PC-9 (cell line): ENCODE measurements at regions of chr4 and their contacts with region 1.

Region 1: GRCh38 chr4:11428899-11429698 is 405 bp upstream of the HS3ST1 start:
- DNase-seq: peak; percentile 87 to 95
- H3K4me3 ChIP-seq: peak overlapping the region; percentile 89
- H3K27ac ChIP-seq: peak overlapping the region; percentile 90
- H3K4me1 ChIP-seq: peaks cover 27% of the 10 kb centered on the region
- H3K27me3 ChIP-seq: no peaks in the 10 kb centered on the region
- CTCF ChIP-seq: peak; percentile 56

Region 2: DNA sequence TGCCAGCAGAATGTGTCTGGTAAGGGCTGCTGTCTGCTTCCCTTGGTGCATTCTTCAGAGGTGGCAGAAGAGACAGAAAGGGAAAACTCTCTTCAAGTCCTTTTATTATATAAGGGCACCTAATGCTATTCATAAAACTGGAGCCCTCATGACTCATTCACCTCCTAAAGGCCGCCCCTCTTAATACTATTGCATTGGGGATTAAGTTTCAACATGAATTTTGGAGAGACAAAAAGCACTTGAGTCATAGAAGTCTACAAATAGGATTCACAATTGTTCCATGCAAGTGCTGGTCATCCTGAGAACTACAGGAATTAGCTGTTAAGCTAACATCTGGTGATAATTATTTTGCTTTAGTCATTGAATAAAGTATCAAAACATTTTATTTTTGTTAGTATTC is 349.9 kb before region 1 on chr4:
- CTCF ChIA-PET with region 1: no interaction called
- POLR2A ChIA-PET with region 1: no interaction called
- intact Hi-C with region 1: no loop called
- DNase-seq: no peak
- H3K4me3 ChIP-seq: no peak overlapping the region
- H3K27ac ChIP-seq: no peak overlapping the region
- H3K4me1 ChIP-seq: no peaks in the 10 kb centered on the region
- H3K27me3 ChIP-seq: no peaks in the 10 kb centered on the region
- CTCF ChIP-seq: no peak

Region 3: GRCh38 chr4:11469650-11470437 is 40.7 kb after region 1 on chr4:
- CTCF ChIA-PET with region 1: no interaction called
- POLR2A ChIA-PET with region 1: no interaction called
- intact Hi-C with region 1: loop called (anchors 5 kb)
- DNase-seq: no peak
- H3K4me3 ChIP-seq: no peak overlapping the region
- H3K27ac ChIP-seq: no peak overlapping the region
- H3K4me1 ChIP-seq: no peaks in the 10 kb centered on the region
- H3K27me3 ChIP-seq: no peaks in the 10 kb centered on the region
- CTCF ChIP-seq: no peak

Region 4: DNA sequence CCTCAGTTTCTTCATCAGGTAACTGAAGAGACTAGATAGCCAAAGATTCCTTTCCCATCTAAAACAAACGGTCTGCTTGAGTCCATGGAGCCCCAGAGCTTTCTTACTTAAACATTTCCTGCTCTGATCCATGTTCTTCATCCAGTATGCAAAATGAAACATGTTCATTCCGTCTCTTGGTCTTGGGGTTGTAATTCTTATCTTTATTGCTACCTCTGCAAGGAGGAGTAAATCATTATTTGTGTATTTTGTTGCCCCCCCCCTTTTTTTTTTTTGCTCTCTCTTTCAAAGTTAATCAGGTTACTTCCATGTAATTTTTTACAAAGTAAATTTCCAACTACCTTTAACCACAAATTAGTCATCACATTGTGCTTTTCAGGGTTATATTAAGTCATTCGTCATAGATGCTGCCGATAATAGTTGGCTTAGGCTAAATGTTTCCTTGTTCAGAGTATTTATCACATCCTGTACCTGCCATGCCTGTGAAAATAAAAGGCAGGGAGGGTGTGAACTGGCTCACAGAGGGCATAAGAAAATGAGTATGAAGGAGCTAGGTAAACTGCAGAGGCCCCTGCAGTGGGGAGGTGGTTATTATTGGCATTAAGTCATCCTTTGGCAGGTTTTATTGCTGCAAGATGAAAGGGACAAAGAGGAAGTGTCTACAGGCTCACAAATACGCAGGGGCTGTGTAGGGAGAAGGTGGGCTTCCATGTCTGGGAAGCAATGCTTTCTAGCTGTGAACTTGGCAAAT is 76.3 kb after region 1 on chr4:
- CTCF ChIA-PET with region 1: interaction called, 3 read pairs
- POLR2A ChIA-PET with region 1: interaction called, 18 read pairs
- intact Hi-C with region 1: loop called (anchors 2 kb)
- DNase-seq: peak; percentile 71 to 98
- H3K4me3 ChIP-seq: no peak overlapping the region
- H3K27ac ChIP-seq: peak overlapping the region; percentile 92
- H3K4me1 ChIP-seq: peaks cover 31% of the 10 kb centered on the region
- H3K27me3 ChIP-seq: no peaks in the 10 kb centered on the region
- CTCF ChIP-seq: no peak

Region 5: GRCh38 chr4:11614399-11614798 is 185.3 kb after region 1 on chr4:
- CTCF ChIA-PET with region 1: no interaction called
- POLR2A ChIA-PET with region 1: no interaction called
- intact Hi-C with region 1: loop called (anchors 1 kb)
- DNase-seq: peak; percentile 80 to 96
- H3K4me3 ChIP-seq: peak overlapping the region; percentile 46
- H3K27ac ChIP-seq: peak overlapping the region; percentile 98
- H3K4me1 ChIP-seq: peaks cover 48% of the 10 kb centered on the region
- H3K27me3 ChIP-seq: no peaks in the 10 kb centered on the region
- CTCF ChIP-seq: no peak

Region 6: DNA sequence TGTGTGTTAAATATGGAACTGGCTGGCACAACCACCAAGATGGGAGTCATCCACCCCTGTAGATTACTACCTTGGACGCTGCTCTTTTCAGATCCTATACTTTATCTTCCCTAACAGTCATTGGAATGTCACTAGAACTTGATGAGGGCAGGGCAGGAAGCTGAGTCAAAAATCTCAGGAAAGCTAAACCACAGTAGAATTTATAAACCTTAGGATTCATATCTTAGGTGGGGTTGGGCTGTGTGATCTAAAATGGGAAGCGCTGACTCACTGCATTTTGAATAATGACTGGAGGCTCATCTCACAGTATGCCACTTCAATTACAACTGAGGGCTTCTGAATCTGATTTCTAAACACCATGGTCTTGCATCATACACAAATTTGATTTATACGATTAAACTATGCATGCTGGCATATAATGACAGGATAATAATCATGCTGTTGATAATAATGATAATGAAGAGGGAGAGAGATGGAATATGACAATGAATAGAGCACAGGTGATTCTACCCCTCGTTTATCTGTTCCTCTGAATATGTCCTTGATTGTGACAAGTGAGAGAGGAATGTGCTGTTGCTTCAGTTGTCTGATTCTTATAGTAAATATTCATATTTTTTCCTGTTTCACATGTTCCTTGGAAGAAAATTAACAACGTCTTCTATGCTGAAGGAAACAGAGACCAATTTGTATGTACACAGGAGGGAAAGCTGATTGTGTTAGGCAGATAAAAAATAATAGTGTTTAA is 269.9 kb after region 1 on chr4:
- CTCF ChIA-PET with region 1: no interaction called
- POLR2A ChIA-PET with region 1: interaction called, 12 read pairs
- intact Hi-C with region 1: loop called (anchors 2 kb)
- DNase-seq: peak; percentile 61 to 91
- H3K4me3 ChIP-seq: 0 out of 2 replicates have a peak overlapping the region, but pooled peaks have one; percentile 12
- H3K27ac ChIP-seq: peak overlapping the region; percentile 99
- H3K4me1 ChIP-seq: peaks cover 52% of the 10 kb centered on the region
- H3K27me3 ChIP-seq: no peaks in the 10 kb centered on the region
- CTCF ChIP-seq: no peak